ENCODE measurements at regions of chr14 and their contacts with region 1.

Region 1: DNA sequence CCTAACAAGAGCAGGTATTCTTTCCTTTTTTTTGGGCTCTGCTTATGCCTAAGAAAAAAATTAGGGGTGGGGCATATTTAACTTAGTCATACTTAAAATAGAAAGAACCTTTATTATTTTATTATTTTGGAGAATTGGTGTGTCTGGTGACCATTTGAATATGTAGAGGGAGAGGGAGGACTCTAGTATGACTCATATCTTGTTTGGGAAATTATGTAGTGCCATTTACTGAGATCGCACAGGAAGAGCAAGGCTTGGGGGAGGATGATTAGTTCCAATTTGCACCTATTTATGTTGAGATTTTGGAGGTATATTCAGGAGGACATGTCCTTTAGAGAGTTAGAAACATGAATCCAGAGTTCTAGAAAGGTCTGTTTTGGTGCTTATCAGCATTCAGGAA is 9.9 kb downstream of the ZNF410 start:
- DNase-seq: no peak
- H3K4me3 ChIP-seq: no peak overlapping the region
- H3K27ac ChIP-seq: no peak overlapping the region
- H3K4me1 ChIP-seq: peaks cover 7% of the 10 kb centered on the region
- H3K27me3 ChIP-seq: no peaks in the 10 kb centered on the region
- CTCF ChIP-seq: no peak
- POLR2A ChIP-seq: no peak

Region 2: GRCh38 chr14:73245401-73246325 is 650.9 kb before region 1 on chr14:
- intact Hi-C with region 1: loop called (anchors 10 kb)
- DNase-seq: no peak
- H3K4me3 ChIP-seq: peak overlapping the region; percentile 34 to 53
- H3K27ac ChIP-seq: no peak overlapping the region
- H3K4me1 ChIP-seq: peaks cover 3% of the 10 kb centered on the region
- H3K27me3 ChIP-seq: no peaks in the 10 kb centered on the region
- CTCF ChIP-seq: no peak
- POLR2A ChIP-seq: no peak

Measured in testis (tissue), 5 donors.